Sciatic nerve (tissue), 2 donors: ENCODE measurements at regions of chr5 and their contacts with region 1.

Region 1: GRCh38 chr5:168086104-168086610 is 205.3 kb upstream of the WWC1 start:
- DNase-seq: no peak
- ATAC-seq: peak; percentile 83

Region 2: GRCh38 chr5:169805527-169805934 is 1719.4 kb after region 1 on chr5:
- intact Hi-C with region 1: loop called (anchors 5 kb)
- DNase-seq: no peak
- ATAC-seq: no peak